Activated naive CD4-positive, alpha-beta T cell treated with anti-CD3 and anti-CD28 coated beads for 36 hours (primary cell): ENCODE measurements at regions of chr17 and their contacts with region 1.

Region 1: DNA sequence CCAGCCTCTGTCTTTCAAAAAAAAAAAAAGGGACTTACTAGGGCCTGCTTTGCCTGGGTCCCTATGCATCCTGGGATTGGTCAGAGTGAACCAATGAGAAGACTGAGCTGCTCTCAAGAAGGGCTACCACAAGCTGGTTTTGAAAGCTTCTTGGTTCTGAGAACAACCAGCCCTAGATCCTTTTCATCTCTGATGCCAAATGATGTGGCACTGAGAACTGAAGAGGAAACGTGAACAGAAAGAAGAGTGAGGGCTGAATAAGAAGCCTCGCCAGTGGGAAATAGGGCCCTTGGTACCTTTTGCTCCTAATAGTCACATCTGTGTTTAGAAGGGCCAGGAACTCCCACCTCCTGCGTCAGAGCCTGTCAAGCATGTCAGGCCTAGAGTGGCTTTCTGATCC is 10.7 kb downstream of the TACO1 start:
- DNase-seq: peak; percentile 65
- H3K4me3 Mint-ChIP-seq: peak overlapping the region; percentile 66
- H3K27ac Mint-ChIP-seq: peak overlapping the region; percentile 97
- H3K4me1 Mint-ChIP-seq: peaks cover 28% of the 10 kb centered on the region
- H3K27me3 Mint-ChIP-seq: no peaks in the 10 kb centered on the region

Region 2: DNA sequence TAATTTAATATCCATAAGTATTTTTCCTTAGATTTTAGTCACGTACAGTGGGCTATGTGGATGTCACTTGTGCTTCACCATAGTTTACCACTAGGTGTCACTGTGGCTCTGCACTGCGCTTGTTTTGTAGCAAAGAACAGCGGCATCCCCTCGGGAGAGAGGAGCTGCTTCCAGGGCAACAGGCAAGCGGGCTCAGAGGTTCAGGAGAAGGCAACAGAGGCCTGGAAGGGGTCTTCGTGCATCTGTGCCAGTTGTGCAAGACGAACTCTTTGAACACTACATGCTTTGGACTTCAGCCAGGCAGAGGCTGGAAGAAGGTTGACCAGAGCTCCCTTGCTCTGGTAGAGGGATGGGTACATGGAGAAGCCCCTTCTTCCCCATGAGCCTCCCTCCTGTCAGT is 185.9 kb before region 1 on chr17:
- CTCF ChIA-PET with region 1: interaction called, 99 read pairs
- intact Hi-C with region 1: loop called (anchors 1 kb)
- DNase-seq: peak; percentile 85
- H3K4me3 Mint-ChIP-seq: no peak overlapping the region
- H3K27ac Mint-ChIP-seq: no peak overlapping the region
- H3K4me1 Mint-ChIP-seq: peaks cover 21% of the 10 kb centered on the region
- H3K27me3 Mint-ChIP-seq: no peaks in the 10 kb centered on the region

Region 3: DNA sequence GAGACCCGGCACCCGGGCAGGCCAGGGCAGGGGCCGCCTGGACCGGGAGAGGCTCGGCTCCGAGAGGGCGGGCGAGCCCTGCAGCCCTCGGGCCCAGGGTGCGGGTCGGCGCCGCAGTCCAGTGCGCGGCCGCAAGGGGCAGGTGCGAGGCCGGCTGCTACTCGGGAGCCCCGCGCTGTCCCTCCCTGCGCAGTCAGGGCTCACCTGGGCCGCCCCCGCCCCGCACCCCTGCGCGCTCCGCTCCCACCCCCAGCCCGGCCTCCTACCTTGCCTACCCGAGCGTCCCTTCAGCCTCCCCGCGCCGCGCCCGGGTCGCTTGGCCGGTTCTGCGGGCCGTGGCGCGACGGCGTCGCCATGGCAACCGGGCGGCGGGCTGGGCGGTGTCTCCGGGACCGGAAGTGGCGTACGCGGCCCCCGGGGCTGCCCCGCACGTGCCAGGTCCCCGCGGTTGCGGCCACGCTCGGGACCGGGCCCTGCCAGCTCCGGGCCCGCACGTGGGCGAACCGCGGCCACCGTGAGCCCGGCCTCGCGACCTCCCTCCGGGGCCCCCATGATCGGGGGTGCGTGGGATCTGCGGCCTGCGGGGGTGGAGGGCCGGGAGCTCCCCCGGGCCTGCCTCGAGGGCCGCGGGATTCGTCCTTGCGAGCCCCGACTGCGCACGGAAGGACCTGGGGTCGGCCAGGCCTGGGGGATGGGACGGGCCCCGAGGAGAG is 165.2 kb before region 1 on chr17 and contains the start of gene CYB561:
- CTCF ChIA-PET with region 1: interaction called, 13 read pairs
- intact Hi-C with region 1: loop called (anchors 1 kb)
- DNase-seq: peak; percentile 66
- H3K4me3 Mint-ChIP-seq: peak within 1 kb of the TSS; percentile 67
- H3K27ac Mint-ChIP-seq: peak within 1 kb of the TSS; percentile 79
- H3K4me1 Mint-ChIP-seq: peaks cover 23% of the 10 kb centered on the region
- H3K27me3 Mint-ChIP-seq: no peaks in the 10 kb centered on the region
- total RNA-seq, gene CYB561: 2.3 to 2.6 TPM

Region 4: DNA sequence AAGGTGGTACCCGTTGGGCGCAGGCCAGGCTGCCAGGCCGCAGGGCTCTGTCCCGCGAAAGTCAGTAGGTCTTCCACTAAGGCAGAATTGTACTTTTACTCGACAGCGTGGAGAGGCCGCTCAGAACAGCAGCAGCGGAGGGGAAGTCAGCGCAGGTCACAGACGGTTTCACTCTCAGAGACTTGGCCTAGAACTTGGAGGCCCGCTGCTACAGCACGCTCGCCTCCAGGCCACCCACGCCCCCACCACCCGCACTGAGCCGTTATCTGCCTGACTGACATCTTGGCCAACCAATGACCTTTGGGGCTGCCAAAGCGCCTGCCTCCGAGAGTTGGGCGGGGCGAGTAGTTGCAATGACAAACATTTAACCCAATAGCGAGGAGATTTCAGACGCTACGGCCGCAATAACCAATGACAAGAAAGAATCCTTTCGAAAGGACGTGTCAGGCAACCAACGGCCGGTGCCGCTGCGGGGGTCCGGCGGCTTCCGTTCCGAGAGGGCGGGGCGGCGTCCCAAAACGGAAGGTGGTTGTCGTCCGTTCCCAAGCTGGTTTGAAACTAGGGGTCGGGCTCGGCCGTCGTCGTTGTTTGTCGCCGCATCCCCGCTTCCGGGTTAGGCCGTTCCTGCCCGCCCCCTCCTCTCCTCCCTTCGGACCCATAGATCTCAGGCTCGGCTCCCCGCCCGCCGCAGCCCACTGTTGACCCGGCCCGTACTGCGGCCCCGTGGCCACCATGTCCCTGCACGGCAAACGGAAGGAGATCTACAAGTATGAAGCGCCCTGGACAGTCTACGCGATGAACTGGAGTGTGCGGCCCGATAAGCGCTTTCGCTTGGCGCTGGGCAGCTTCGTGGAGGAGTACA is 61.2 kb before region 1 on chr17 and contains the start of gene DCAF7:
- CTCF ChIA-PET with region 1: interaction called, 14 read pairs
- intact Hi-C with region 1: loop called (anchors 1 kb)
- DNase-seq: peak; percentile 100
- H3K4me3 Mint-ChIP-seq: peak within 1 kb of the TSS; percentile 82
- H3K27ac Mint-ChIP-seq: peak within 1 kb of the TSS; percentile 94
- H3K4me1 Mint-ChIP-seq: peaks cover 33% of the 10 kb centered on the region
- H3K27me3 Mint-ChIP-seq: no peaks in the 10 kb centered on the region
- total RNA-seq, gene DCAF7: 102 to 103 TPM

Region 5: DNA sequence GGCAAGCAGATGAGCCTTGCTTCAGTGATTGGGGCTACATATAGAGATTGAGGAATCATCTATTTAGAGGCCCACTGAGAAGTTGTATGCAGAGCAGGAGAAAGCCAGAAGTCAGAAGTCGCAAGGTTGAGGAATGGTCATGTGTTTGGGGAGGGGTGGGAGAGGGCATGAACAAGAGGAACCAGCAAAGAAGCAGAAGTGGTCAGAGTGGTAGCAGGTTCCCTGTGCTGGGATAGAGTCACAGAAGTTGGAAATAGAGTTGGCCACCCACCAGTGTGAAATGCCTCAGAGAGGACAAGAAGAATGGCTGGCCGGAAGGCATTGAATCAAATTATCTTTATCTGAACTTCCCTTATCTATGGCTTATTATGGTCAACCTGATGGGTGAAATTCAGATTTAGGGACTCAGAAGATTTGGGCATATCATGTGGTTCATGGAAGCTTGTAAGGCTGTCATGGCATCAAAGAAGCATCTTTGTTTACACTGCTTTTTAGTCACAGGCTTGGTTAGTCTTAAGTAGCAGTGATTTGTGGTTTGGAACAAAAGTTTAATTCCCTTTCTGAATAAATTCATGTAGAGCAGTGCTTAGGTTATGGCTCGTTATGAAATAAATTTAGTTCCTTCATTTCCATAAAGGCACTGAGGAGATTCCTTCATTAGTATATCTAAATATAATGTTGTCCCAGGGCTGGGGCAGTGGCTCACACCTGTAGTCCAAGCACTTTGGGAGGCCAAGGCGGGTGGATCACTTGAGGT is 30.5 kb after region 1 on chr17:
- CTCF ChIA-PET with region 1: no interaction called
- intact Hi-C with region 1: no loop called
- DNase-seq: no peak
- H3K4me3 Mint-ChIP-seq: no peak overlapping the region
- H3K27ac Mint-ChIP-seq: no peak overlapping the region
- H3K4me1 Mint-ChIP-seq: peaks cover 22% of the 10 kb centered on the region
- H3K27me3 Mint-ChIP-seq: no peaks in the 10 kb centered on the region